Sciatic nerve (tissue), 2 donors: ENCODE measurements at regions of chr13 and their contacts with region 1.

Region 1: GRCh38 chr13:108961542-108962125 is 332.2 kb downstream of the MYO16 start:
- DNase-seq: no peak
- ATAC-seq: peak; percentile 87

Region 2: GRCh38 chr13:110126391-110126961 is 1164.8 kb after region 1 on chr13:
- intact Hi-C with region 1: loop called (anchors 10 kb)
- DNase-seq: no peak
- ATAC-seq: peak; percentile 83